ENCODE measurements at regions of chr10 and their contacts with region 1.

Region 1: DNA sequence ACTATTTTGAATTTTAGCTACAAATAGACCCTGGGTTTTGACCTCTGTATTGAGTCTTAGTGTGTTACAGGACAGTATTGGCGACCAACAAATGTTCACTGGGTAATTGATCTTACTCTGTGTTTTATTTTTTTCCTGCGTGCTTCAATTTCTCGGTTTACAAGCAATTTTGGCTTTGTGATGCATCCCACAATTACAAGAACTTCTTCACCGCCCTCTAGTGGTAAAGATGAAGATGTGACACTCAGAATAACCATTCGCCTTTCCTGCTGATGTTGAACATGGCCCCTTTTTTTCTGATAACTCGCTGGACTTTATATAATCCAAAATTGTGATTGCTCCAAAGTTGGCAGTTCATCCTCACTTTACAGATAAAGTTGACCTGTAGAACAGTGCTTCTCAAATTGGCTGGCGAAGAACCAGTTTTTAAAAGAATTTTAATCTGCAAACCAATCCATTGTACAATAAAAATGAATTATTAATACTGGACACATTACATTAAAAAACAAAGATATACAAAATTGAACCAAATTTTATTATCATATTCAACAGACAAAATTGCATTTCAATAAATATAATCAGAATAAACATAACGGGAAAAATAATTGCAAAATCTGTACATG is 20.2 kb upstream of the SMC3 start:
- DNase-seq: peak; percentile 37 to 67 (median 66)
- H3K4me3 ChIP-seq: no peak overlapping the region
- H3K4me3 Mint-ChIP-seq: no peak overlapping the region
- H3K27ac ChIP-seq: no peak overlapping the region
- H3K27ac Mint-ChIP-seq: no peak overlapping the region
- H3K4me1 ChIP-seq: no peaks in the 10 kb centered on the region
- H3K4me1 Mint-ChIP-seq: peaks cover 2% of the 10 kb centered on the region
- H3K27me3 ChIP-seq: no peaks in the 10 kb centered on the region
- H3K27me3 Mint-ChIP-seq: peaks cover 2 to 6% (median 3%) of the 10 kb centered on the region in 3 donors
- CTCF ChIP-seq: peak; percentile 83

Region 2: GRCh38 chr10:110414563-110415309 is 132.5 kb before region 1 on chr10:
- intact Hi-C with region 1: loop called in 1 of 2 experiments (anchors 5 kb)
- DNase-seq: peak; percentile 79 to 98 (median 88)
- H3K4me3 ChIP-seq: peak overlapping the region in 1 of 3 experiments; percentile 35
- H3K4me3 Mint-ChIP-seq: peak overlapping the region; percentile 17 to 38
- H3K27ac ChIP-seq: peak overlapping the region; percentile 3 to 65
- H3K27ac Mint-ChIP-seq: peak overlapping the region; percentile 19 to 89 (median 72)
- H3K4me1 ChIP-seq: peaks cover 44 to 61% of the 10 kb centered on the region in 2 donors
- H3K4me1 Mint-ChIP-seq: peaks cover 62% of the 10 kb centered on the region
- H3K27me3 ChIP-seq: no peaks in the 10 kb centered on the region
- H3K27me3 Mint-ChIP-seq: peaks cover 1 to 12% (median 3%) of the 10 kb centered on the region in 3 donors
- CTCF ChIP-seq: no peak

Region 3: DNA sequence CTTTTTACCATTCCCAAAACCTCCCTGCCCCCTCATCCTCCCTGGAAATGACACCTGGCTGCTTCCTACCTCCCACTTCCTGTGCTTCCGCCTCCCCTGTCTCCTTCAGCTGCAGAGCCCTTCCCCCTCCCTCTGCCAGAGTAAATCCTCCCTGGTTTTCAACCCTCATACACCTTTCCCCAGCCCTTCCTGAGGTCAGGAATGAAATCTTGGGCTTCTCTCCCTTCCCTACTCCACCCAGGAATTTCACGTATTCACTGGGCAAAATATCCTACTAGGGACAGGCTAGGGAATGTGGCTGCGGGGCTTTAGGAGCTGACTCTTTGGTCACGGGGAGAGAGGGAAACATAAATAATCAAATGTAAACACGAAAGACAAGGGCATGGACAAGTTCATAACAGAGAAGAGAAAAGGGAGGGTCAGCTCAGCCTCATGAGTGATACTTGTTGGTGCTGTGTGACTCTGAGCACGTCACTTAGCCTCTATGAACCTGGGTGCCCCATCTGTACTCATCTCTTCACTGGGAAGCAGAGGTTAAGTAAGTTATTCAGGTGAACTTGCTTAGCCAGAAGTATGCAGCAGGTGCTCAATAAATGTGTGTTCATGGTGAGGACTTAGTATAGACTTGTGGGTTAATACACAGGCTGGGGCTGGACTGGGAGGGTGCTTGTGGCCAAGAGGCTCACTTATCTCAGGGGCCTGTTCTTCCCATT is 59.7 kb before region 1 on chr10:
- intact Hi-C with region 1: no loop called
- DNase-seq: no peak
- H3K4me3 ChIP-seq: no peak overlapping the region
- H3K4me3 Mint-ChIP-seq: no peak overlapping the region
- H3K27ac ChIP-seq: no peak overlapping the region
- H3K27ac Mint-ChIP-seq: no peak overlapping the region
- H3K4me1 ChIP-seq: no peaks in the 10 kb centered on the region
- H3K4me1 Mint-ChIP-seq: peaks cover 8% of the 10 kb centered on the region
- H3K27me3 ChIP-seq: peaks cover 2 to 4% of the 10 kb centered on the region in 2 donors
- H3K27me3 Mint-ChIP-seq: peaks cover 12 to 18% (median 12%) of the 10 kb centered on the region in 3 donors
- CTCF ChIP-seq: no peak

Region 4: DNA sequence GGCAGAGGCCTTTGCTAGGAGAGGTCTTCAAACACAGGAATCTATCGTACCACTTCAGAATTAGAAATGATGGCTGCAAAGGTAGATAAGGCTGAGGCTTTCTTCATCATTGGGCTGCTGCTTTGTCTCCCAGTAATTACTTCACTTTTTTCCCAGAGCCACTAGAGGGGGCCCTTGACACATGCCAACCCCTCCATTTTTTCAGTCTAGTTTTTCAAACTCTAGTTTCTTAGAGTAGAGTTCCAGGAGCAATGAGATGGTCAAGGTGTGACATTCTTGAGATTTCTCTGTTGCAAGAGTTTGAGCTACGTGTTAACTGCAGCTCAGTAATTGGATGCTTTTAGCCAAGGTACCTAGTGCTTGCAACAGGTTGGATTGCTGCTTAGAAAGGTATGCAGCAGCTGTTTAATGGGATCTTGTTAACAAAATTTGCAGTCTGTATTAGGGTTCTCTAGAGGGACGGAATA is 63.1 kb after region 1 on chr10:
- intact Hi-C with region 1: no loop called
- DNase-seq: peak; percentile 10 to 14 (median 12)
- H3K4me3 ChIP-seq: no peak overlapping the region
- H3K4me3 Mint-ChIP-seq: no peak overlapping the region
- H3K27ac ChIP-seq: no peak overlapping the region
- H3K27ac Mint-ChIP-seq: peak overlapping the region in 1 of 7 donors; percentile 17
- H3K4me1 ChIP-seq: no peaks in the 10 kb centered on the region
- H3K4me1 Mint-ChIP-seq: peaks cover 7% of the 10 kb centered on the region
- H3K27me3 ChIP-seq: no peaks in the 10 kb centered on the region
- H3K27me3 Mint-ChIP-seq: no peaks in the 10 kb centered on the region
- CTCF ChIP-seq: peak; percentile 82